Activated CD8-positive, alpha-beta T cell treated with anti-CD3 and anti-CD28 coated beads, Interleukin-2, amount 10 ng/mL, durations not matched to agents 7 days and 5 days (primary cell): ENCODE measurements at regions of chr1 and their contacts with region 1.

Region 1: DNA sequence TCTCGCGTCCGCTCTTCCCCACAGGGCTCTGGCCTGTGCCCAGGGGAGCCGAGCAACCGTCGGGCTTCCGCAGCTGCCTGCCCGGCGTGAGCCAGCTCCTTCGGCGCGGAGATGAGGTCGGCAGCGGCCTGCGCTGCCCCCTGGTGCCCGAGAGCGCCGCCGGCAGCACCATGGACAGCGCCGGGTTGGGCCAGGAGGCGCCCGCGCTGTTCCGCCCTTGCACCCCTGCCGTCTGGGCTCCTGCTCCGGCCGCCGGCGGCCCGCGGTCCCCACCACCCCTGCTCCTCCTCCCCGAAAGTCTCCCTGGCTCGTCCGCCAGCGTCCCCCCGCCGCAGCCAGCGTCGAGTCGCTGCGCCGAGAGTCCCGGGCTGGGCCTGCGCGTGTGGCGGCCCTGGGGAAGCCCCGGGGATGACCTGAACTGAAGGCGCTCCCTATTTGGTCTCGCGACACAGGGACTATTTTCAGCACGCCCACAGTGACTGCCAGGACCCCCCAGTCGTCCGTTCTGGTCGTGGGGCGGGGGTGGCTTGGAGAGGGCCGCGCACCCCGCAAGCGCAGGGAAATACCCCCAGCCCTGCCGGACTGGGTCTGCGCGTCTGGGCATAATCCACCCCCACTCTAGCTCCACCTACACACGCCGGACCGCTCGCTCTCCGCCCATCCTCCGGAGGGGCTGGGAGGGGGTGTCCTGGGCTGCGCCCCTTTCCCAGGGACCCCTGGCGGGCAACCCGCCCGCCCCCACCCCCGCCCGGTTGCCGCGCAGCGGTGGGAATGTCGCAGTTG is 1.3 kb downstream of the HES3 start:
- DNase-seq: peak; percentile 85
- ATAC-seq: peak; percentile 81
- H3K4me3 Mint-ChIP-seq: no peak overlapping the region
- H3K27ac Mint-ChIP-seq: no peak overlapping the region
- H3K4me1 Mint-ChIP-seq: peaks cover 16% of the 10 kb centered on the region
- H3K27me3 Mint-ChIP-seq: peaks cover 60% of the 10 kb centered on the region

Region 2: DNA sequence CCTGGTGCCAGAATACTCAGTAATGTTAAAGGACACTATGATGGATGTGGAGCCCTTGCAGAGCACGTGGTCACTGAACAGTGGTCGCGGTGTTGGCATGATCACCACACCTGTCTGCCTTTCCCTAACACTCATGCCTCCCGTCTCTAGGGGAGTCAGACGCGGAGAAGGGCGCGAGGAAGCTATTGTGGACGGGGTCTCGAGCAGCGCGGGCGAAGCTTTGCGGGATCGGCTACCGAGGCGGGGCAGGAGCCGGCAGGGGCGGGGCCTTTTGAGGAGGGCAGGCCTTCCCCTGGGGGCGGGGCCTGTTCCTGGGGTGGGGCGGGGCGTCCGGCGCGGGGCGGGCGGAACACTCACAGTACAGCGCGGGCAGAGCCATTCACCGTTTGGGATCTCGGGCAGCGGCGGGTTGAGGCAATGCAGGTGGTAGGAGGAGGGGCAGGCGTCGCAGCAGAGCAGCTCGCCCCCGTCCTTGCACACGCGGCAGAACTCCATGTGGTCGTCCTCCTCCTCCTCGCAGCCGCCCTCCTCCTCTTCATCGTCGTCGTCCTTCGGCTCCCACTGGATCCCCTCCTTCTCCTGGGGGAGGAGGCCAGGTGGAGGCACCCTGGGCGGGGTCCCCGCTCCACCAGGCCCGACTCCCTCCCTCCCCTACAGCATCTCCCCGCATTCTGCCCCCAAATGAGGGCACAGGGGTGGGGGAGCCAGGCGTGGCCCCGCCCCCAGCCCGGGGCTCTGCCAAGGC is 96.6 kb before region 1 on chr1:
- CTCF ChIA-PET with region 1: no interaction called
- POLR2A ChIA-PET with region 1: no interaction called
- DNase-seq: peak; percentile 66
- ATAC-seq: peak; percentile 88
- H3K4me3 Mint-ChIP-seq: no peak overlapping the region
- H3K27ac Mint-ChIP-seq: no peak overlapping the region
- H3K4me1 Mint-ChIP-seq: peaks cover 3% of the 10 kb centered on the region
- H3K27me3 Mint-ChIP-seq: peaks cover 3% of the 10 kb centered on the region

Region 3: DNA sequence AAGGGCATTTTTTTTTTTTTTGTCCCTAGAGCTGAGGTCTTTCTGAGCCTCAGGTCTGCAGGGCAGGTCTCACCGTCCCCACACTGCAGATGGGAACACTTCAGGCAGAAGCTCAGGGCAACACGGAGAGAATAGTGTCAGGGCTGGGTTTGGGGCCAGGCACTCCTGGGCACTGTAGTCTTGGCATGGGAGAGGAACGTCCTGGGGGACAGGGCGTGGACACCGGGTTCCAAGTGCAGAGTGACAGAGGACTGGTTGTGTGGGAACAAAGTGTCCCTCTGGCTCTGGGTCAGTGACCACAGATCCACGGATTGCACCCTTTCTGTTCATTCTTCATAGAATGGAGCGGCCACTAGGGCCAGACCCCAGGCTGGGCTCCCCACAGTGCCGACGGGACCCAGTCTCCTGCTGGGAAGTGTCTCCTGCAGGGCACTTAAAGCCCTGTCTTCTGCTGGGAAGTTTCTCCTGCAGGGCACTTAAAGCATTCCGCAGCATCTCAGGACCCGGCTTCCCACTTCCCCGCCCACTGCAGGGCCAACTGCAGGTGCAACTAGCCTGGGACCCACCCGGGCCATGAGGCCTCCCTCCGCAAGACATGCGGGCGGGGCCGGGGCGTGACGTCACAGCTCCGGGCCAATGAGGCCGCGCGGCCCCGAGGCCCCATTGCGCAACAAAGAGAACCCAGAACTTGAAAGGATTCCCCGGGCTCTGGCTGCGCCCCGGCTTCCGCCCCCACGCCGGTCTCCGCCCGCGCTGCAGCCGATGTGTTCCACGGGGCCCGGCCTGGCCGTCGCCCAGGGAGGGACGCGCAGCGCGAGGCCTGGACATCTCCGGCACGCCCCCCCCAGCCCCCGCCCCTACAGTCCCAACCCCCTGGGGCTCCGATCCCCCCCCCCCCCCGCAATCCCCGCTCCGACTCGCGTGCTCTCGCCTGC is 14.5 kb after region 1 on chr1:
- CTCF ChIA-PET with region 1: interaction called, 18 read pairs
- POLR2A ChIA-PET with region 1: no interaction called
- DNase-seq: peak; percentile 88
- ATAC-seq: peak; percentile 76
- H3K4me3 Mint-ChIP-seq: peak overlapping the region; percentile 31
- H3K27ac Mint-ChIP-seq: no peak overlapping the region
- H3K4me1 Mint-ChIP-seq: peaks cover 16% of the 10 kb centered on the region
- H3K27me3 Mint-ChIP-seq: peaks cover 13% of the 10 kb centered on the region

Region 4: GRCh38 chr1:6359216-6360116 is 114.2 kb after region 1 on chr1:
- CTCF ChIA-PET with region 1: interaction called, 11 read pairs
- POLR2A ChIA-PET with region 1: no interaction called
- DNase-seq: peak; percentile 80
- ATAC-seq: peak; percentile 85
- H3K4me3 Mint-ChIP-seq: peak overlapping the region; percentile 74
- H3K27ac Mint-ChIP-seq: peak overlapping the region; percentile 91
- H3K4me1 Mint-ChIP-seq: peaks cover 58% of the 10 kb centered on the region
- H3K27me3 Mint-ChIP-seq: no peaks in the 10 kb centered on the region

Region 5: GRCh38 chr1:6401673-6402072 is 156.4 kb after region 1 on chr1:
- CTCF ChIA-PET with region 1: interaction called, 18 read pairs
- POLR2A ChIA-PET with region 1: interaction called, 3 read pairs
- DNase-seq: no peak
- ATAC-seq: no peak
- H3K4me3 Mint-ChIP-seq: no peak overlapping the region
- H3K27ac Mint-ChIP-seq: no peak overlapping the region
- H3K4me1 Mint-ChIP-seq: peaks cover 12% of the 10 kb centered on the region
- H3K27me3 Mint-ChIP-seq: peaks cover 5% of the 10 kb centered on the region

Region 6: GRCh38 chr1:6438047-6438525 is 192.8 kb after region 1 on chr1:
- CTCF ChIA-PET with region 1: interaction called, 22 read pairs
- POLR2A ChIA-PET with region 1: no interaction called
- DNase-seq: peak; percentile 80
- ATAC-seq: peak; percentile 67
- H3K4me3 Mint-ChIP-seq: no peak overlapping the region
- H3K27ac Mint-ChIP-seq: no peak overlapping the region
- H3K4me1 Mint-ChIP-seq: peaks cover 2% of the 10 kb centered on the region
- H3K27me3 Mint-ChIP-seq: peaks cover 24% of the 10 kb centered on the region